OCI-LY7 (cell line): ENCODE measurements at regions of chrX and their contacts with region 1.

Region 1: DNA sequence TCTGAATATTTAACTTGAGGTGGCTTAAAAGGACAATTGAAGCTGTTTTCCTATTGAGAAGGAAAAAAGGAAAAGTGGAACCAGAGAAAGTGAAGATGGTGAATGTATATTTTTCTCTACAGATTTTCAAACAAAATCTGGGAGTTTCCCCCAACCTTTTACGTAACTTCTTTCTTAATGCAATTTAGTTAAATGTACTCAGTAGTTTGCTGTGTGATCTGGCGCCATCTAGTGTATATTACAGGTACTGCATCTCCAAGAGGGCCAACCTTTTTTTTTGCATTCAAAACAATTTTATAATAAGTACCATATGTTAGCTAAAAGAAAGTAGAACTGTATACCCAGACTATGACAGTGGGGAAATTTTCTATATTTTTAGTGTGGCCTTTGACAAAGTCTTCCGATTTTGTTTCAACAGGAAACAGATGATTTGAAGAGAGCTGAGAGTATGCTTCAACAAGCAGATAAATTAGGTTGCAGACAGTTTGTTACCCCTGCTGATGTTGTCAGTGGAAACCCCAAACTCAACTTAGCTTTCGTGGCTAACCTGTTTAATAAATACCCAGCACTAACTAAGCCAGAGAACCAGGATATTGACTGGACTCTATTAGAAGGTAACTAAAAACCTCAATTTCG is 82.0 kb downstream of the PLS3 start:
- DNase-seq: peak; percentile 14
- H3K4me3 ChIP-seq: no peak overlapping the region
- H3K27ac ChIP-seq: no peak overlapping the region
- H3K4me1 ChIP-seq: no peaks in the 10 kb centered on the region
- CTCF ChIP-seq: peak; percentile 86

Region 2: GRCh38 chrX:115330498-115331168 is 312.4 kb before region 1 on chrX:
- CTCF ChIA-PET with region 1: no interaction called
- POLR2A ChIA-PET with region 1: no interaction called
- intact Hi-C with region 1: loop called (anchors 2 kb)
- DNase-seq: peak; percentile 11
- H3K4me3 ChIP-seq: no peak overlapping the region
- H3K27ac ChIP-seq: no peak overlapping the region
- H3K4me1 ChIP-seq: no peaks in the 10 kb centered on the region
- CTCF ChIP-seq: peak; percentile 73